ENCODE measurements at regions of chrX and their contacts with region 1.

Region 1: GRCh38 chrX:31154946-31155345 is 83.1 kb upstream of the FTHL17 start:
- DNase-seq: no peak
- H3K4me3 ChIP-seq: no peak overlapping the region
- H3K27ac ChIP-seq: no peak overlapping the region
- H3K4me1 ChIP-seq: no peaks in the 10 kb centered on the region
- H3K27me3 ChIP-seq: peaks cover 0 to 9% of the 10 kb centered on the region in 2 donors
- CTCF ChIP-seq: no peak
- POLR2A ChIP-seq: no peak

Region 2: DNA sequence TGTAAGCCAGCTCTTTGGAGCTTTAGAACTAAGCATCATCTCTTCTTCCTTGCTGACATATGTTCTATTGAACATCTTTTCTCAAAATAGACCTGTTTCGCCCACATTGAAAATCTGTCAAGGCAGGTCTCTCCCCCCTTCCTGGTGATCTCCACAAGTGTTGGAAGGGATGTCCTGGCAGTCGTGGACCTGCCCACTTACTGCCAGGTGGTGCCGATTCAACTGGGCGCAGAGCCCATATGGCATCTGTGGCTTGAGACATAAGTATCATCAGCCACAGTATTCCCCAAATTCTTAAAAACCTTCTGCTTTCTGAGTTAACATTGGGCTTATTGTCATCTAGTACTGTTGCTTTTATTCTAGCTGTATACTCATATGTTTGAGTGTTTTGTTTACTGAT is 886.2 kb after region 1 on chrX:
- intact Hi-C with region 1: loop called (anchors 10 kb)
- DNase-seq: no peak
- H3K4me3 ChIP-seq: no peak overlapping the region
- H3K27ac ChIP-seq: no peak overlapping the region
- H3K4me1 ChIP-seq: no peaks in the 10 kb centered on the region
- H3K27me3 ChIP-seq: no peaks in the 10 kb centered on the region
- CTCF ChIP-seq: no peak
- POLR2A ChIP-seq: no peak